ENCODE measurements at regions of chr5 and their contacts with region 1.

Region 1: DNA sequence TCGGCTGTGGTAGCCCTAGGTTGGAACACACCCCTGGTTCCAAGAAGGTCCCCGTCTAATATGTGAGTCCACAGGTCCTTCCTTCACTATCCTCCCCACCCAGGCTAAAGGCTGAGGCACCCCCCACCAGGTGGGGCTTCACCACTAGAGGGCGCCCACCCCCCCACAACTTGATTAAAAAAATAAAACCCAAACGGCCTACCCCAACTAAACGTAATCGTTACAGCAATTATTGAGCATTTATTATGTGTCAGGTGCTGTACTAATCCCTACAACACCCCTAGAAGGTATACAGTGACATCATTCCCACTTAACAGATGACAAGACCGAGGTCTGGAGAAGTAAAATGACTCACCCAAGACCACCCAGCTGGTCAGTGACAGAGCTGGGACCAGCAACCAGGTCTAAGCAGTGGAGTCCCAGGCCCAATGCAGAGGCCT is 65.0 kb downstream of the FGF18 start:
- DNase-seq: peak in 1 of 2 experiments; percentile 77
- H3K4me3 ChIP-seq: no peak overlapping the region
- H3K27ac ChIP-seq: no peak overlapping the region
- H3K4me1 ChIP-seq: peaks cover 0 to 6% (median under 1%) of the 10 kb centered on the region in 4 experiments; a peak in 2 of 7 replicates
- H3K27me3 ChIP-seq: no peaks in the 10 kb centered on the region; a peak in 1 of 7 replicates
- CTCF ChIP-seq: peak; percentile 69 to 72 (median 70)
- EP300 ChIP-seq: no peak
- POLR2A ChIP-seq: no peak
- RAD21 ChIP-seq: peak; percentile 56 to 75

Region 2: GRCh38 chr5:171365351-171365750 is 119.1 kb before region 1 on chr5:
- CTCF ChIA-PET with region 1: no interaction called
- POLR2A ChIA-PET with region 1: no interaction called
- DNase-seq: peak in 1 of 2 experiments; percentile 53
- H3K4me3 ChIP-seq: no peak overlapping the region
- H3K27ac ChIP-seq: no peak overlapping the region
- H3K4me1 ChIP-seq: no peaks in the 10 kb centered on the region
- H3K27me3 ChIP-seq: no peaks in the 10 kb centered on the region
- CTCF ChIP-seq: peak; percentile 5 to 68 (median 54)
- EP300 ChIP-seq: no peak
- POLR2A ChIP-seq: no peak
- RAD21 ChIP-seq: peak; percentile 55 to 68

Region 3: DNA sequence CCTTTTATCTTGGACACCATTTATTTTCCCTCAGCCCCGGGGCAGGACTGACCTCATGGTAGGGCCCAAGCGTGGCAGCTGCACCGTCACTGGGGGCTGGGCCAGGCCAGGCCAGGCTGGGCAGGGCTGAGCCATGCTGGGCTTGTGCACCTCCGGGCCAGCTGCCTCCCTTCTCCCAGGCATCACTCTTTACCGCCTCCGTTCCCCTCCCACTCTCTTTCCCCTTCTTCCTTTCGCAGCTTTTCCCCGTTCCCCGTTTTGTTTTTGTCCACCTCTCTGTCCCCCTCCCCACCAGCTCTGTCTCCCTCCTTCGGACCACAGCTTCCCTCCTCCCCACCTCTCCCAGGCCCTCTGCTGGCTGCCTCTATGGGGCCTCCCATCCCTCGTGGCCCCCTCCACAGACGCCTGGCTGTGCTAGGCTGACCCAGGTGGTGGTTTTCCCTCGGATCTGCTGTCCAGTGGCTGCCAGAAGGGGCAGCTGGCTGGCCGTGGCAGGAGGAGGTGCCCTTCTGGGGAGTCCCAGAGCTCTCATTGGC is 47.1 kb before region 1 on chr5:
- CTCF ChIA-PET with region 1: interaction called, 15 read pairs
- POLR2A ChIA-PET with region 1: no interaction called
- DNase-seq: no peak
- H3K4me3 ChIP-seq: peak overlapping the region in 1 of 4 experiments; percentile 1; a peak in 2 of 8 replicates
- H3K27ac ChIP-seq: no peak overlapping the region
- H3K4me1 ChIP-seq: peaks cover 0 to 38% (median 23%) of the 10 kb centered on the region in 4 experiments; a peak in 6 of 7 replicates
- H3K27me3 ChIP-seq: no peaks in the 10 kb centered on the region
- CTCF ChIP-seq: peak in 1 of 3 experiments; percentile 14; a peak in 1 of 4 replicates
- EP300 ChIP-seq: no peak
- POLR2A ChIP-seq: no peak
- RAD21 ChIP-seq: peak in 1 of 2 experiments; percentile 2; a peak in 2 of 4 replicates

Region 4: GRCh38 chr5:171462928-171463862 is 21.3 kb before region 1 on chr5:
- CTCF ChIA-PET with region 1: interaction called, 16 read pairs
- POLR2A ChIA-PET with region 1: interaction called, 3 read pairs
- DNase-seq: no peak
- H3K4me3 ChIP-seq: no peak overlapping the region
- H3K27ac ChIP-seq: no peak overlapping the region
- H3K4me1 ChIP-seq: peaks cover 3 to 9% (median 4%) of the 10 kb centered on the region in 4 experiments; a peak in 6 of 7 replicates
- H3K27me3 ChIP-seq: no peaks in the 10 kb centered on the region; a peak in 2 of 7 replicates
- CTCF ChIP-seq: no peak
- EP300 ChIP-seq: no peak
- POLR2A ChIP-seq: no peak
- RAD21 ChIP-seq: no peak

Region 5: GRCh38 chr5:171494452-171495121 is 10.1 kb after region 1 on chr5:
- CTCF ChIA-PET with region 1: interaction called, 37 read pairs
- POLR2A ChIA-PET with region 1: interaction called, 4 read pairs
- DNase-seq: peak; percentile 27 to 74
- H3K4me3 ChIP-seq: peak overlapping the region in 2 of 4 experiments; percentile 5 to 21; a peak in 1 of 8 replicates
- H3K27ac ChIP-seq: peak overlapping the region; percentile 46; the same call in 1 of the 2 replicates
- H3K4me1 ChIP-seq: peaks cover 6 to 17% (median 13%) of the 10 kb centered on the region in 4 experiments
- H3K27me3 ChIP-seq: no peaks in the 10 kb centered on the region; a peak in 1 of 7 replicates
- CTCF ChIP-seq: no peak
- EP300 ChIP-seq: peak in 1 of 2 experiments; percentile 33; a peak in 1 of 3 replicates
- POLR2A ChIP-seq: no peak
- RAD21 ChIP-seq: no peak

Region 6: GRCh38 chr5:171521219-171521633 is 36.7 kb after region 1 on chr5:
- CTCF ChIA-PET with region 1: interaction called, 21 read pairs
- POLR2A ChIA-PET with region 1: no interaction called
- DNase-seq: peak in 1 of 2 experiments; percentile 61
- H3K4me3 ChIP-seq: no peak overlapping the region
- H3K27ac ChIP-seq: peak overlapping the region; percentile 34; the same call in 1 of the 2 replicates
- H3K4me1 ChIP-seq: peaks cover 10 to 37% (median 20%) of the 10 kb centered on the region in 4 experiments
- H3K27me3 ChIP-seq: peaks cover 0 to 12% (median 2%) of the 10 kb centered on the region in 4 experiments; a peak in 3 of 7 replicates
- CTCF ChIP-seq: no peak
- EP300 ChIP-seq: no peak
- POLR2A ChIP-seq: no peak
- RAD21 ChIP-seq: no peak

Region 7: GRCh38 chr5:171595801-171596231 is 111.3 kb after region 1 on chr5:
- CTCF ChIA-PET with region 1: interaction called, 32 read pairs
- POLR2A ChIA-PET with region 1: no interaction called
- DNase-seq: no peak
- H3K4me3 ChIP-seq: no peak overlapping the region
- H3K27ac ChIP-seq: no peak overlapping the region
- H3K4me1 ChIP-seq: peaks cover 0 to 6% (median 0%) of the 10 kb centered on the region in 4 experiments; a peak in 1 of 7 replicates
- H3K27me3 ChIP-seq: no peaks in the 10 kb centered on the region
- CTCF ChIP-seq: no peak
- EP300 ChIP-seq: no peak
- POLR2A ChIP-seq: no peak
- RAD21 ChIP-seq: no peak

Region 8: GRCh38 chr5:171858303-171858702 is 373.8 kb after region 1 on chr5:
- CTCF ChIA-PET with region 1: interaction called, 24 read pairs
- POLR2A ChIA-PET with region 1: interaction called, 4 read pairs
- DNase-seq: no peak
- H3K4me3 ChIP-seq: no peak overlapping the region
- H3K27ac ChIP-seq: no peak overlapping the region
- H3K4me1 ChIP-seq: peaks cover 0 to 5% (median 2%) of the 10 kb centered on the region in 4 experiments; a peak in 5 of 7 replicates
- H3K27me3 ChIP-seq: no peaks in the 10 kb centered on the region
- CTCF ChIP-seq: peak; percentile 64 to 89 (median 73)
- EP300 ChIP-seq: no peak
- POLR2A ChIP-seq: peak in 1 of 2 experiments; percentile 10; a peak in 1 of 3 replicates
- RAD21 ChIP-seq: peak; percentile 69 to 70